GM10248 (cell line): ENCODE measurements at regions of chr12 and their contacts with region 1.

Region 1: GRCh38 chr12:104528952-104529840 is 72.4 kb downstream of the CHST11 start:
- DNase-seq: no peak
- CTCF ChIP-seq: no peak

Region 2: GRCh38 chr12:104546575-104546974 is 17.4 kb after region 1 on chr12:
- CTCF ChIA-PET with region 1: interaction called, 16 read pairs
- POLR2A ChIA-PET with region 1: no interaction called
- DNase-seq: no peak
- CTCF ChIP-seq: no peak